ENCODE measurements at regions of chr3 and their contacts with region 1.

Region 1: DNA sequence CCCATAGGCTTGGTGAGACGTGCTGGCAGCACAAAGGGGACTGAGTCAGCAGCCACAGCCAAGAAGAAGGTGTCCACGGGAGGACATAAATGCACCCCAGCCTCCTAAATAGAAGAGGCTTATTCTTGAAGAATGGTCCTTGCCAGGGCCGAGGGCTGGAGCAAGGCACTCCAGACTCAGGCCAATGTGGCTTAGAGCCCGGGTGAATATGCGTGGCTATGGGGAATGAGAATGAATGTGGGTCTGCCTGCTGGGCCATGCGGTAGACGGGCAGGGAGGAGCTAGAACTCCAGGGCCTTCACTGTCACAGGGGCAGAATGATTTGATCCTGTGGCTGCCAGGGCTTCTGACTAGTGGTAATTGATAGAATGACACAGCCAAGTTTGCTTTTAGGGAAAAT is 34.0 kb downstream of the DHX30 start:
- DNase-seq: no peak
- H3K4me3 ChIP-seq: no peak overlapping the region
- H3K27ac ChIP-seq: no peak overlapping the region
- H3K4me1 ChIP-seq: no peaks in the 10 kb centered on the region
- H3K27me3 ChIP-seq: no peaks in the 10 kb centered on the region
- CTCF ChIP-seq: no peak

Region 2: DNA sequence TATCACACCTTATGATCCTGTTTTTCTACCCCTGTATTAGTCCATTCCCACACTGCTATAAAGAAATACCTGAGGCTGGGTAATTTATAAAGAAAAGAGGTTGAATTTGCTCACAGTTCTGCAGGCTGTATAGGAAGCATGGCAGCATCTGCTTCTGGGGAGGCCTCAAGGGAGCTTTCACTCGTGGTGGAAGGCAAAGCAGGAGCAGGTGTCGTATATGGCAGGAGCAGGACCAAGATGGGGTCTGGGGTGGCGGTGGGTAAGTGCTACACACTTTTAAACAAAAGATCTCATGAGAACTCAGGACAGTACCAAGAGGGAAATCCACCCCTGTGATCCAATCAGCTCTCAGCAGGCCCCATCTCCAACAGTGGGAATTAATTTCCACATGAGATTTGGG is 345.8 kb before region 1 on chr3:
- CTCF ChIA-PET with region 1: no interaction called
- POLR2A ChIA-PET with region 1: no interaction called
- intact Hi-C with region 1: no loop called
- DNase-seq: no peak
- H3K4me3 ChIP-seq: no peak overlapping the region
- H3K27ac ChIP-seq: no peak overlapping the region
- H3K4me1 ChIP-seq: no peaks in the 10 kb centered on the region
- H3K27me3 ChIP-seq: no peaks in the 10 kb centered on the region
- CTCF ChIP-seq: no peak

Region 3: GRCh38 chr3:47989981-47990440 is 153.0 kb after region 1 on chr3:
- CTCF ChIA-PET with region 1: interaction called, 14 read pairs
- POLR2A ChIA-PET with region 1: no interaction called
- intact Hi-C with region 1: loop called (anchors 1 kb)
- DNase-seq: peak; percentile 82
- H3K4me3 ChIP-seq: no peak overlapping the region
- H3K27ac ChIP-seq: no peak overlapping the region
- H3K4me1 ChIP-seq: peaks cover 15% of the 10 kb centered on the region
- H3K27me3 ChIP-seq: no peaks in the 10 kb centered on the region
- CTCF ChIP-seq: peak; percentile 73

Region 4: GRCh38 chr3:48157950-48158376 is 321.0 kb after region 1 on chr3:
- CTCF ChIA-PET with region 1: interaction called, 4 read pairs
- POLR2A ChIA-PET with region 1: no interaction called
- intact Hi-C with region 1: loop called (anchors 5 kb)
- DNase-seq: peak; percentile 59
- H3K4me3 ChIP-seq: no peak overlapping the region
- H3K27ac ChIP-seq: no peak overlapping the region
- H3K4me1 ChIP-seq: no peaks in the 10 kb centered on the region
- H3K27me3 ChIP-seq: no peaks in the 10 kb centered on the region
- CTCF ChIP-seq: peak; percentile 68

Region 5: DNA sequence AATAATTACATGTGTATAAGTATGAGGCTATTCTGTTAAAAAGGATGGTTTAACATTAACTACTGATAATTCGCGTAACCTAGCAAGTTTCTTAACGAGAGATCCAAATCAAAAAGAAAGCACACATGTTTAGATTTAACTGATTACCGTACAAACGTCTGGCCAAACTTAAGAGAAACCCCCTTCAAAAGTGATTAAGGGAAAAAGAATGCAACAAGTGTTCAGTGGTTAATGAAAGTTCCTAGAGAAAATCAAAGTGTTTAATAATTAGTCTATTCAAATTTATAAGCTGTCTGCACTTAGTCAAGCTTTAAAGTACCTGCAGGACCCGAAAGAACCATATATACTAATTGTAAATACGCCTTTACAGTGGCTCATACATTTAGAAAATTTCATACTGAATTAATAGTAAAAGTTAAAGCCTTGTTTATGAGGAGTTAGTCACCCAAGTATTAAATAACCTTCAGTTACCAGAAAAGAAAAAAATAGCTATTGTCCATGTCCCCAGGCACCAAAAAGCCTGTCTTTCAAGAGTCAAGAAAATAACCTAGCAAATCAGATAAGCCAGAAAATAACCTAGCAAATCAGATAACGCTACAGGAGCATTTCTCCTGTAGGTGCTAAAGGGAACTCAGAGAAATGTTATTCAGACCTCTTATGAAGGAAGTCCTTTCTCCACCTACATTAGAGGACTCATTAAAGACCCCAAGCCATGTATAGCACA is 438.5 kb after region 1 on chr3:
- CTCF ChIA-PET with region 1: no interaction called
- POLR2A ChIA-PET with region 1: no interaction called
- intact Hi-C with region 1: no loop called
- DNase-seq: no peak
- H3K4me3 ChIP-seq: no peak overlapping the region
- H3K27ac ChIP-seq: no peak overlapping the region
- H3K4me1 ChIP-seq: no peaks in the 10 kb centered on the region
- H3K27me3 ChIP-seq: no peaks in the 10 kb centered on the region
- CTCF ChIP-seq: no peak